CD14-positive monocyte (primary cell): ENCODE measurements at regions of chr15 and their contacts with region 1.

Region 1: GRCh38 chr15:72199711-72200212 is 2.2 kb upstream of the GRAMD2A start:
- DNase-seq: peak; percentile 69 to 75 (median 71)
- H3K4me3 ChIP-seq: no peak overlapping the region
- H3K4me3 Mint-ChIP-seq: no peak overlapping the region
- H3K27ac ChIP-seq: peak overlapping the region in 1 of 2 donors; percentile 62
- H3K27ac Mint-ChIP-seq: peak overlapping the region in 4 of 7 donors; percentile 2 to 87 (median 60)
- H3K4me1 ChIP-seq: peaks cover 24 to 33% of the 10 kb centered on the region in 2 donors
- H3K4me1 Mint-ChIP-seq: peaks cover 31% of the 10 kb centered on the region
- H3K27me3 ChIP-seq: peaks cover 3 to 24% of the 10 kb centered on the region in 2 donors
- H3K27me3 Mint-ChIP-seq: peaks cover 24 to 32% (median 26%) of the 10 kb centered on the region in 3 donors
- CTCF ChIP-seq: peak; percentile 92

Region 2: GRCh38 chr15:72047020-72047419 is 152.7 kb before region 1 on chr15:
- intact Hi-C with region 1: no loop called
- DNase-seq: no peak
- H3K4me3 ChIP-seq: no peak overlapping the region
- H3K4me3 Mint-ChIP-seq: no peak overlapping the region
- H3K27ac ChIP-seq: no peak overlapping the region
- H3K27ac Mint-ChIP-seq: no peak overlapping the region
- H3K4me1 ChIP-seq: no peaks in the 10 kb centered on the region
- H3K4me1 Mint-ChIP-seq: no peaks in the 10 kb centered on the region
- H3K27me3 ChIP-seq: no peaks in the 10 kb centered on the region
- H3K27me3 Mint-ChIP-seq: peaks cover 0 to under 1% (median 0%) of the 10 kb centered on the region in 3 donors
- CTCF ChIP-seq: no peak

Region 3: DNA sequence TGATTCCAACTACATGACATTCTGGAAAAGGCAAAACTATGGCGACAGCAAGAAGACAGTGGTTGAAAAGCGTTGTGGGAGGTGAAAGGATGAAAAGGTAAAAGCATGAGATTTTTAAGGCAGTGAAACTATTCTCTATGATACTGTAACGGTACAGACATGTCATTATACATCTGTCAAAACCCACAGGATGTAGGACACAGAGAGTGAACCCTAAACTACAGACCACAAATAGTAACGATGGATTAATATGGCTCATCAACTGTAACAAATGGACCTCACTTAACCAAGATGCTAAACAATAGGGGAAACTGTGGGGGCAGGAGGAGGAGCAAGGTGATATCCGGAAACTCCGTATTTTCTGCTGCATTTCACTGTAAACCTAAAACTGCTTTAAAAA is 120.9 kb before region 1 on chr15:
- intact Hi-C with region 1: no loop called
- DNase-seq: no peak
- H3K4me3 ChIP-seq: no peak overlapping the region
- H3K4me3 Mint-ChIP-seq: no peak overlapping the region
- H3K27ac ChIP-seq: no peak overlapping the region
- H3K27ac Mint-ChIP-seq: no peak overlapping the region
- H3K4me1 ChIP-seq: no peaks in the 10 kb centered on the region
- H3K4me1 Mint-ChIP-seq: no peaks in the 10 kb centered on the region
- H3K27me3 ChIP-seq: no peaks in the 10 kb centered on the region
- H3K27me3 Mint-ChIP-seq: no peaks in the 10 kb centered on the region
- CTCF ChIP-seq: no peak

Region 4: DNA sequence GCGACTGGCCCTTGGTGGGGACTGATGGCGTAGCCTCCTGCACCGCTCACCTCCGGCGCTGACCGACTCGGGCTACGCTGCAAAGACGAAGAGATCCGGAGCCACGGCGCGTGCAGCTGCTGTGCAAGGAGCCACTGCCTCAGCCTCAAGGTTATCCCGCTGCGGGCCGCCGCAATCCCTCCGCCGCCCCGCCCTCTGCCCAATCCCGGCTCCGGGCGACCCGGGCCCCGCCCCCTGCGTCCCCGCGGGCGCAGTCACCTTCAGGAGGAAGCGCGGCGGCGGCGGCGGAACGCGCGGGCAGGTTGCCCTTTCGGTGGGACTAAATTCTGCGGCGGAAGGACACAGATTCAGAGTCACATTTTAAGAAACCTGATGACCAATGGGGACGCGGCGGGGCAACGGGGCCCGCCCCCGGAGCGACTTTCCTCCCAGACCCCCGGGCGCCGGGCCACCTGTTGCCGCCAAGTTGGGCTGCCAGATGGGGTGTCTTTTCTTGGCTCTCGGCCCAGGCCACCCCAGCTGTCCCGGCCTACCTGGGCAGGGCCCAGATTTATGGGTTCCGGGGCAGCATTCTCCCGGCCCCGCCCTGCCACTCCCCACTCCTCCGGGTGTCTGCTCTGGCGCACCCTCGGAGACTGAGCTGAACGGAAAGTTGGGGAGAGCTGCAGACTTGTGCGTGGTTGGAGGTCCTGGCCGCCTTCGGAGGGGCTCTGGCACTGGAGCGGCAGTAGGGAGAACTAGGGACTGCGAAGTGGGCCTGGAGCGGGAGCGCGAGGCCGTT is 31.5 kb after region 1 on chr15 and contains the start of gene PKM:
- intact Hi-C with region 1: loop called in 1 of 2 experiments (anchors 5 kb)
- DNase-seq: peak; percentile 90 to 95 (median 94)
- H3K4me3 ChIP-seq: peak within 1 kb of the TSS; percentile 91 to 95 (median 95)
- H3K4me3 Mint-ChIP-seq: peak within 1 kb of the TSS; percentile 99
- H3K27ac ChIP-seq: peak within 1 kb of the TSS; percentile 98 to 100
- H3K27ac Mint-ChIP-seq: peak within 1 kb of the TSS; percentile 98 to 100 (median 100)
- H3K4me1 ChIP-seq: peaks cover 61 to 66% of the 10 kb centered on the region in 2 donors
- H3K4me1 Mint-ChIP-seq: peaks cover 60% of the 10 kb centered on the region
- H3K27me3 ChIP-seq: no peaks in the 10 kb centered on the region
- H3K27me3 Mint-ChIP-seq: no peaks in the 10 kb centered on the region
- CTCF ChIP-seq: no peak
- polyA plus RNA-seq, gene PKM: 544 to 999 (median 986) TPM

Region 5: DNA sequence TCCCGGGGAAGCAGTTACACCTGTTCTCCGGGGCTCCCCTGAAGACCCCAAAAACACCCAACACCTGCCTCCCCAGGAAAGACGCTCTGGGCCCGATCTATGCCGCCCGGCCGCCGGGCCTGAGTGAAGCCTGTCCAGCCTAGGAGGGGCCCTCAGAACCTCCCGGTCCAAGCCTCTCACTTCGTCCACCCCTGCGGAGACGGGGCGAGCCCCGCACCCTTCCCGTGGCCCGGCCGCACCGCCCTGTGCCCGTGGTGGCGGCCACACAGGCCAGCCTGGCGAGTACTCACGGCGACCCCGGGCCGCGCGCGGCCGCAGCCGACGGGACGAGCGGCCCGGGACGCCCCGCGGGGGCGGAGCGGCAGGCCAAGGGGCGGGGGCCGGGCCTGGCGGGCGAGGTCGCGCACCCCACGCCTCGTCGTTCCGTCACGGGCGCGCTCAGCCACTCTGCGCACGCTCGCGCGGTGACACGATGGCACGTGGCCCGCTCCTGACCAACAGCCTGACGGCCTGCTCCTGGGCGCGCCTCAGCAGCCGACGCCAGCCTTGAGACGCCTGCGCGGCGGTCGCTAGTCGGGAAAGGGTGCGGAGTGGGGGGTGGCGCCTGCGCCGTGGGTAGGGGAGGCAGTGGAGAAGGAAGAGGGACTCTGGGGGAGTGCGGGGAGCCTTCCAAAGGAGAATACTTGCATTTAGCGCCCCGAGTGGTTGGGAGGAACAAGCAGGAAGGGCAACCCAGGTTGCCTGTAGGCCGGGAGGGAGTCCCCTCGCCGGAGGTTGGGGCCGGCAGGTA is 72.6 kb after region 1 on chr15 and contains the start of gene PARP6:
- intact Hi-C with region 1: loop called (anchors 5 kb)
- DNase-seq: peak; percentile 98 to 100 (median 99)
- H3K4me3 ChIP-seq: peak within 1 kb of the TSS; percentile 59 to 81 (median 63)
- H3K4me3 Mint-ChIP-seq: peak within 1 kb of the TSS; percentile 85 to 92
- H3K27ac ChIP-seq: peak within 1 kb of the TSS; percentile 46 to 90
- H3K27ac Mint-ChIP-seq: peak within 1 kb of the TSS; percentile 83 to 93 (median 88)
- H3K4me1 ChIP-seq: peaks cover 15 to 20% of the 10 kb centered on the region in 2 donors
- H3K4me1 Mint-ChIP-seq: peaks cover 27% of the 10 kb centered on the region
- H3K27me3 ChIP-seq: no peaks in the 10 kb centered on the region
- H3K27me3 Mint-ChIP-seq: peaks cover 2 to 7% (median 5%) of the 10 kb centered on the region in 3 donors
- CTCF ChIP-seq: peak; percentile 78
- polyA plus RNA-seq, gene PARP6: 12.9 to 165 (median 13.5) TPM

Region 6: GRCh38 chr15:72473614-72474465 is 274.1 kb after region 1 on chr15 and contains the start of gene ARIH1:
- intact Hi-C with region 1: loop called in 1 of 2 experiments (anchors 10 kb)
- DNase-seq: peak; percentile 93 to 96 (median 96)
- H3K4me3 ChIP-seq: peak within 1 kb of the TSS; percentile 74 to 94 (median 89)
- H3K4me3 Mint-ChIP-seq: peak within 1 kb of the TSS; percentile 94 to 98
- H3K27ac ChIP-seq: peak within 1 kb of the TSS; percentile 99
- H3K27ac Mint-ChIP-seq: peak within 1 kb of the TSS; percentile 98 to 99 (median 99)
- H3K4me1 ChIP-seq: peaks cover 17 to 39% of the 10 kb centered on the region in 2 donors
- H3K4me1 Mint-ChIP-seq: peaks cover 31% of the 10 kb centered on the region
- H3K27me3 ChIP-seq: no peaks in the 10 kb centered on the region
- H3K27me3 Mint-ChIP-seq: peaks cover 0 to 1% (median 0%) of the 10 kb centered on the region in 3 donors
- CTCF ChIP-seq: peak; percentile 20
- polyA plus RNA-seq, gene ARIH1: 13.5 to 47.2 (median 14.4) TPM